Sigmoid colon (tissue), 7 donors: ENCODE measurements at regions of chr1 and their contacts with region 1.

Region 1: DNA sequence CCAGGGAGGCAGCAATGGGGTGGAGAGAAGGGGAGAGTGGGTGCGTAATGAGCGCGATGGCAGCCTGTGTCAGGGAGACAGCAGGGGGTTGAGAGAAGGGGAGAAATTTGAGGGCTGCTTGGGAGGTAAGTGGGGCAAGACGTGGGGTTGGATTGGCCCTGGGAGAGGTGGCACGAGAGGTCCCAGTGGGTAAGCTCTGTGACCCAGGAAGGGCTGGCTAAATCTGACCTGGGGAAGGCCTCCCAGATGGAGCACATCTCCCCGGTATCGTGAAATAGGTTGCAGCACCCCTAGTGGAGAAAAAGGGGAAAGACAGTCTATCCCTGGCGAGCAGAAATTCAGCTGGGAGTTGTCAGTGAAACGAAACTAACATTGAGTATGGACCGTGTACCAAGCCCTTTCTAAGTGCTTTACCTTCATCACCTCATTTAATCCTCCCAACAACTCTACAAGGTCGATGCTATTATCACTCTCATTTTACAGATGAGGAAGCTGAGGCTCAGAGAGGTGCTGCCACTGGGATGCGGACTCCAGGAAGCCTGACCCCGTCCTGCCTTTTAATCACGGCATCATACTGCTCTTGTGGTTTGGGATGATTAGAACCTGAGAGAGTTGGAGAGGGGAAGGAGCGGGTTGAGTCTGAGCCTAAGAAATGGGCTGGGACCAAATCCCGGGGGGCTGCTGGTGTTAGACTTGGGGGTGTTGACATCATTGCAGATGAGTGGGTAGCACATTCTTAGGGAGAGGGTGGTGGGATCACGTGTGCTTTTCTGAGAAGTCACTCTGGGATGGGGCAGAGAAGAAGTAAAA is 56.6 kb upstream of the RPL11 start:
- DNase-seq: peak; percentile 77
- H3K4me3 ChIP-seq: peak overlapping the region; percentile 2 to 50 (median 42)
- H3K27ac ChIP-seq: peak overlapping the region; percentile 73 to 81 (median 76)
- H3K4me1 ChIP-seq: peaks cover 0 to 5% (median 0%) of the 10 kb centered on the region in 4 donors
- H3K27me3 ChIP-seq: no peaks in the 10 kb centered on the region
- CTCF ChIP-seq: peak; percentile 64 to 94 (median 88)
- EP300 ChIP-seq: no peak
- POLR2A ChIP-seq: no peak

Region 2: DNA sequence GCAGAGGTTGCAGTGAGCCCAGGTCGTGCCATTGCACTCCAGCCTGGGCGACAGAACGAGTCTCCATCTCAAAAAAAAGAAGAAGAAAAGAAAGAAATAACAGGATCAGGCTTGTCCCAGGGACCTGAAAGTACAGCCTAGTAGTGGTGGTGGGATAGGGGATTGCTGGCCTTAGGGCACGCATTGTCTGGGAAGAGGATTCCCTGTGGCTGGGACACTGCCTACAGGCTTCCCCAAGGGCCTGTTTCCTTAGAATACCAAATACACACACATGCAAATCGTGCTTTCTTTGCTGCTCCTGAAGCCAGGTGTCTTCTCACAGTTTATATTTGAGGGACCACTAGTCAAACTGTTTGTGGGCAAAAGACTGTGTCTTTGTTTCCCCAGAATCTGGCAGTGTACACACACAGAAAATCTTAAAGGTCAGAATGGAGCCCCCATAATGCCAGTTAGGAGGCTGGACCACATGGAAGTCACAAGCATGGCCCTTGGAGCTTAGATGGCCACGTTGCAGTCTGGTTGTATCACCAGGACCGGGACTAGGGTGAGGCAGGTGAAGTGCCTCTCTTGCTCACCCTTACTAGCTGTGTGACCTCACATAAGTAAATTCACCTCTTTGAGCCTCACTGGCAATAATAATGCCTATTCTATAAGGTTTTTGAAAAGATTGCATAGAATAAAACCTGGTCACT is 138.4 kb before region 1 on chr1:
- intact Hi-C with region 1: loop called (anchors 2 kb)
- DNase-seq: no peak
- H3K4me3 ChIP-seq: no peak overlapping the region
- H3K27ac ChIP-seq: no peak overlapping the region
- H3K4me1 ChIP-seq: peaks cover 0 to 5% (median 0%) of the 10 kb centered on the region in 4 donors
- H3K27me3 ChIP-seq: no peaks in the 10 kb centered on the region
- CTCF ChIP-seq: no peak
- EP300 ChIP-seq: no peak
- POLR2A ChIP-seq: no peak

Region 3: DNA sequence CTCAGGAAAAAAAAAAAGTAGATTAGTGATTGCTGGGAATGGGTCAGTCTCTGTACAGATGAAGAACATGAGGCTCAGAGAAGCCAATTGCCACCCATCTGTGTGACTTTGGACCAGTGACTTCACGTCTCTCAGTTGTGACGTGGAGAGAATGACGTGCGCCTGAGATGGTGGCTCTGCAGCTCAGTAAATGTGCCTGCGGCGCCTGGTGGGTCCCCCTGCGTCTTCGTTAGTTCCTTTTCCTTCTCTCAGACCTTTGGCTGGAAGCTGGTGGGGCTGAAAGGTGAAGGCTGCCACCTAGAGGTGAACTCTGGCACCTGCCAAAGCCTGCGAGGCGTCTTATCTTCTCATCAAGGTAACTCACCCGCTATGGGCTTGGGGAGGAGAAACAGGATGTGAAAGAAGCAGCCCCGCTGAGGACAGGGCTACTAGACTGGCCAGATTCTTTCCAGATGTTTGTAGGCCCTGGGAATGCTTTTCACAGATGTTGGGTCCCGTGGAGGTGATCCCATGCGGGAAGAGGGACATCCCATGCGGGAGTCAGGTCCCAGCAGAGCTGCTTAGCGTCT is 95.3 kb before region 1 on chr1:
- intact Hi-C with region 1: loop called (anchors 1 kb)
- DNase-seq: peak; percentile 92
- H3K4me3 ChIP-seq: peak overlapping the region in 2 of 4 donors; percentile 12 to 16
- H3K27ac ChIP-seq: no peak overlapping the region
- H3K4me1 ChIP-seq: peaks cover 0 to 11% (median 8%) of the 10 kb centered on the region in 4 donors
- H3K27me3 ChIP-seq: no peaks in the 10 kb centered on the region
- CTCF ChIP-seq: peak; percentile 78 to 91 (median 88)
- EP300 ChIP-seq: no peak
- POLR2A ChIP-seq: no peak